HEK293 (cell line): ENCODE measurements at regions of chr11 and their contacts with region 1.

Region 1: GRCh38 chr11:16820324-16821092 is 82.1 kb downstream of the C11orf58 start:
- H3K4me3 ChIP-seq: no peak overlapping the region
- H3K27ac ChIP-seq: no peak overlapping the region
- H3K4me1 ChIP-seq: no peaks in the 10 kb centered on the region
- CTCF ChIP-seq: peak; percentile 17; the same call in 1 of the 2 replicates

Region 2: GRCh38 chr11:16801288-16801980 is 19.1 kb before region 1 on chr11:
- CTCF ChIA-PET with region 1: interaction called, 21 read pairs
- POLR2A ChIA-PET with region 1: no interaction called
- H3K4me3 ChIP-seq: no peak overlapping the region
- H3K27ac ChIP-seq: no peak overlapping the region
- H3K4me1 ChIP-seq: no peaks in the 10 kb centered on the region
- CTCF ChIP-seq: no peak

Region 3: GRCh38 chr11:16809886-16810668 is 10.4 kb before region 1 on chr11:
- CTCF ChIA-PET with region 1: interaction called, 23 read pairs
- POLR2A ChIA-PET with region 1: no interaction called
- H3K4me3 ChIP-seq: no peak overlapping the region
- H3K27ac ChIP-seq: no peak overlapping the region
- H3K4me1 ChIP-seq: no peaks in the 10 kb centered on the region
- CTCF ChIP-seq: no peak

Region 4: DNA sequence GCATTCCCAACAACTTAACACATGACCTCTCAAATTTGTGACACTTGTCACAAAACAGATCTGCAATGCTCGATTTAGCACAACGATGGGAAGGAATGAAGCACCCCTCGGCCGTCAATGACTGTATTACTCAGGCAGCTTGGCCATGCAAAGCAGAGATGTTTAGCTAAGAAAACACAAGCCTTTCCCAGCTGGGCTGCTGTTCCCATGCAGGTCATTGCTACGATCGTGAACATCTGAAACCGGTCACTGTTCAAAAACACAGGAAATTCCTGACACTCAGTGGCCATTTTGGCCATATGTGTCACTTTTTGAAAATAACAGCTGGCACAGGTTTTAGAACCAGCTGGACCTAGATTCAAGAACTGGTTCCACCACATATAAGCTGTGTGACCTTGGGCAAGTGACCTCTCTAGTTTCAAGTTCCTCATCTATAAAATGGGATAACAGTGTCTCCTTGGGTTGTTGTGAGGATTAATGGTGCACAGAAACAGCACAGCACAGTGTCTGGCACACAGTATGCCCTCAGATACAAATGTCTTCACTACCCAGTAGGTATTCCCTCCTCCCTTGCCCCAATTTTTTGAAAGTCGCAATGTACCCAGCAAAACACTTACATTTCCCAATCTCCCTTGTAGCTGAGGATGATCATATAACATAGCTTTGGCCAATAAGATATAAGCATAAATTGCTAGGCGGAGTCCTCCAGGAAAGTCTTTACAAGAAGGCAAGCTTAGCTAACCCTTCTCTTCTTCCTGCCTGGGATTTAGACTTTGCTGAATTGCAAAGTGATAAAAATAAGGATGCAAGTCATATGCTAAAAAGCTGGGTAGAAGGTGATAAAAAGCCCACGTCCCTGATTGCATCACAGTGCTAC is 11.0 kb after region 1 on chr11:
- CTCF ChIA-PET with region 1: interaction called, 28 read pairs
- POLR2A ChIA-PET with region 1: no interaction called
- H3K4me3 ChIP-seq: no peak overlapping the region
- H3K27ac ChIP-seq: no peak overlapping the region
- H3K4me1 ChIP-seq: no peaks in the 10 kb centered on the region
- CTCF ChIP-seq: no peak

Region 5: DNA sequence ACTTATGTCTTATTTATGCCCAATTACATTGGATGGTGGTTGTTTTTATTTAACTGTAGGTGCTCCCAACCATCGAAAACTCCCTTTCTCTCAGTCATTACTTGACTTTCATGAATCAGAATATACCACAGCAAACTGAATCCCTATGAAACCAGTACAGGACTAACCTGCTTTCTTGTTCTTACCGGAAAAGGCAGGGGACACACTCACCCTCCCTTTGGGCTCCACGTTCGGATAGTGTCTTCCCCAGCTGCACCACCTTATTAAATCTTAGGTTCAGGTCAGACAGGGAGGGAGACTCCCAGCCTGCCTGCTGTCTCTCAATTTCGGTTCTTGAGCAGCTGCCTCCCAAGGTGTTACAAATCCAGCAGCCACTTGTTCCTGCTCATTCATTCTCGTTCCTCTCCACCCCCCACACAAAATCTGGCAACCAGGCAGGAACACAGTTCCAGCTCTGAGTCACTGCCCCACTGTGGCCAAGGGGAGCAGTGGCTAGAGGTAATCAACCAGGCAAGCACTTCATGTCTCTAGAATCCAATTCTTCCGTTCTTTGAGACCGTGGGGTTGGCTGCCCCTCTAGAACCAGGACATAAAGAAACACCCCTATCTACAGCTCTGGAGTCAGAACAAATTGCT is 60.7 kb after region 1 on chr11:
- CTCF ChIA-PET with region 1: interaction called, 23 read pairs
- POLR2A ChIA-PET with region 1: no interaction called
- H3K4me3 ChIP-seq: no peak overlapping the region
- H3K27ac ChIP-seq: no peak overlapping the region
- H3K4me1 ChIP-seq: peaks cover 8% of the 10 kb centered on the region
- CTCF ChIP-seq: no peak

Region 6: GRCh38 chr11:16945671-16946469 is 125.4 kb after region 1 on chr11:
- CTCF ChIA-PET with region 1: interaction called, 11 read pairs
- POLR2A ChIA-PET with region 1: no interaction called
- H3K4me3 ChIP-seq: no peak overlapping the region
- H3K27ac ChIP-seq: no peak overlapping the region
- H3K4me1 ChIP-seq: no peaks in the 10 kb centered on the region
- CTCF ChIP-seq: peak; percentile 76

Region 7: GRCh38 chr11:17063171-17064002 is 242.9 kb after region 1 on chr11:
- CTCF ChIA-PET with region 1: interaction called, 70 read pairs
- POLR2A ChIA-PET with region 1: no interaction called
- H3K4me3 ChIP-seq: no peak overlapping the region
- H3K27ac ChIP-seq: no peak overlapping the region
- H3K4me1 ChIP-seq: no peaks in the 10 kb centered on the region
- CTCF ChIP-seq: no peak